ENCODE measurements at regions of chr1 and their contacts with region 1.

Region 1: DNA sequence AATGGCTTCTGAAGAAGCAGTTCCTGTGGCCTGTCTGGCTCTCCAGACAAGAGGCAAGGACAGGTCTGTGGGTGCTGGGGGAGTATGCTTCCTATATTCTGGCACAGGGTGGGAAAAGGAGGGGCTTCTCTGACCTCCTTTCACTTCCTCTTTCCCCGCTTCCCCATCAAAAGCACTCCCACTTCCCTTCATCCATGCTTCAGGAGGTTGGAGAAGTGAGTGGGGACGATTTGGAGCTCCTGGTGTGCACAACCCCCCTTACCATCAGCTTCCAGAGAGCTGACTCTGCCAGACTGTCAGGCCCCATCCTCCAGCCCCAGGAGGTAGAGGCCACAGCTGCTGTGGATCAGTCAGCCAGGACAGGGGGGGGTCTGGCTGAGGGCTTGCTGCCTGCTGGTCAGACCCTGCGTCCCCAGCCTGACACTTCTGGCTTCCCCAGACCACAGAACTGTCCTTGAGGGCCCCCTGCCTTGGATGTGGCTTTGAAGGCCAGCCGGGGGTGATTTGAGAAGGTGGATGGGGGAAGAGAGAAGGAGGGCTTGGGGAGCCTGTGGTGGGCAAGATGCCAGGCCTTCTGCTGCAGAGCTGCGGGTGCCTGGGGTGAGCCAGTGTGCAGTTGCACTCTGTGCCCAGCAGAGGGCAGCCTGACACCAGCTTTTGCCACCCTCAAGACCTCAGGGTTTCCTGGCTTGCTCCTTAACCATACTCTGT is 21.5 kb upstream of the TMEM222 start:
- DNase-seq: peak; percentile 80
- H3K4me3 Mint-ChIP-seq: no peak overlapping the region
- H3K27ac Mint-ChIP-seq: no peak overlapping the region
- H3K4me1 Mint-ChIP-seq: no peaks in the 10 kb centered on the region
- H3K27me3 Mint-ChIP-seq: no peaks in the 10 kb centered on the region

Region 2: DNA sequence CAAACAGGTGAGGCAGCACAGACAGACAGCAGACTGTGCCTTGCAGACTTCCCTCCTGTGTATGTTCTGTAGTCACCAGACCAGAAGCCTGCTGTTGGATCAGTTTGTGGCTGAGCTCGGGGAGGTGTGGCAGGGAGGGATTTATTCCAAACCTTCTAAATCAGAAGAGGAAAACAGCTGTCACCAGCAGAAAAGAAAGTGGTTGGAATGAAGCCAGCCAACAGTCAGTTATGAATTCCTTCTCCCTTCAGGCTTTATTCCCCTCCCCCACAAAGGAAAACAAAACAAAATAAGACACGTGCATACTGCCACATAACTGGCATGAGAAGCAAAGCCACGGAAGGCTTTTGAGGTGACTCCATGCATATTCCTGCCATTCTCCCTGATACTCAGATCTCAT is 531.7 kb before region 1 on chr1:
- CTCF ChIA-PET with region 1: no interaction called
- DNase-seq: no peak
- H3K4me3 Mint-ChIP-seq: no peak overlapping the region
- H3K27ac Mint-ChIP-seq: no peak overlapping the region
- H3K4me1 Mint-ChIP-seq: peaks cover 12% of the 10 kb centered on the region
- H3K27me3 Mint-ChIP-seq: no peaks in the 10 kb centered on the region

Region 3: GRCh38 chr1:27044613-27045151 is 255.8 kb before region 1 on chr1:
- CTCF ChIA-PET with region 1: interaction called, 48 read pairs
- DNase-seq: peak; percentile 93
- H3K4me3 Mint-ChIP-seq: peak overlapping the region; percentile 65
- H3K27ac Mint-ChIP-seq: peak overlapping the region; percentile 82
- H3K4me1 Mint-ChIP-seq: peaks cover 22% of the 10 kb centered on the region
- H3K27me3 Mint-ChIP-seq: peaks cover 25% of the 10 kb centered on the region

Region 4: DNA sequence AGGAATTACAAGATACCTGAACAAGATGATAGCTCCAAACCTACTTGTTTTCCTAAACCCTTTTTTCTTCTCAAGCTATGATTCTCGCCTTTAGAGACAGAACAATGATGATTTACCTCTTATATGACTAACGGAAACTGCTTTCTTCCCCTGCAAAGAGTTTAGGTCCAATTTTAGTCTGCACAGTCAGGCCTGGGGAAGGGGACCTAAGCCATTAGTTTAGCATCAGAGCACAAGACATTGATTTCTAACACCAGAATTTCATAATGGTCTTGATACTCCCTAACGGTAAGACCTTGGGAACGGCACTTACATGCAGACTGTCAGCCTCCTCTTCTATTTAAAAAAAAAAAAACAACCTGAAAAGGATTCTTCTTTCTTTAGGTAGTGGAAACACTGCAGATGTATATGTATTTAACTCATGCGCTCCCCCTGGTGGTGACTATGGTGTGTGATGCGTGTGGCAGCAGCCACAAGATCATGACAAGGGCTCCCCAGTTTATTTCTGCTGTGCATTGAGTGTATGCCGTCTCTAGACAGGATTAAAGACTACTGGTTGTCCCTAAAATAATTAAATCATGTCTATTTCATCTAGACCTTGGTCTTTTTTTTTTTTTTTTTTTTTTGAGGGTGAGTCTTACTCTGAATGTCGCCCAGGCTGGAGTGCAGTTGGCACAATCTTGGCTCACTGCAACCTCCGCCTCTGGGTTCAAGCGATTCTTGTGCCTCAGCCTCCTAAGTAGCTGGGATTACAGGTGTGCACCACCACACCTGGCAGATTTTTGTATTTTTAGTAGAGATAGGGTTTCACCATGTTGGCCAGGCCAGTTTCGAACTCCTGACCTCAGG is 15.8 kb before region 1 on chr1:
- CTCF ChIA-PET with region 1: interaction called, 22 read pairs
- DNase-seq: peak; percentile 93
- H3K4me3 Mint-ChIP-seq: no peak overlapping the region
- H3K27ac Mint-ChIP-seq: no peak overlapping the region
- H3K4me1 Mint-ChIP-seq: no peaks in the 10 kb centered on the region
- H3K27me3 Mint-ChIP-seq: no peaks in the 10 kb centered on the region

Region 5: DNA sequence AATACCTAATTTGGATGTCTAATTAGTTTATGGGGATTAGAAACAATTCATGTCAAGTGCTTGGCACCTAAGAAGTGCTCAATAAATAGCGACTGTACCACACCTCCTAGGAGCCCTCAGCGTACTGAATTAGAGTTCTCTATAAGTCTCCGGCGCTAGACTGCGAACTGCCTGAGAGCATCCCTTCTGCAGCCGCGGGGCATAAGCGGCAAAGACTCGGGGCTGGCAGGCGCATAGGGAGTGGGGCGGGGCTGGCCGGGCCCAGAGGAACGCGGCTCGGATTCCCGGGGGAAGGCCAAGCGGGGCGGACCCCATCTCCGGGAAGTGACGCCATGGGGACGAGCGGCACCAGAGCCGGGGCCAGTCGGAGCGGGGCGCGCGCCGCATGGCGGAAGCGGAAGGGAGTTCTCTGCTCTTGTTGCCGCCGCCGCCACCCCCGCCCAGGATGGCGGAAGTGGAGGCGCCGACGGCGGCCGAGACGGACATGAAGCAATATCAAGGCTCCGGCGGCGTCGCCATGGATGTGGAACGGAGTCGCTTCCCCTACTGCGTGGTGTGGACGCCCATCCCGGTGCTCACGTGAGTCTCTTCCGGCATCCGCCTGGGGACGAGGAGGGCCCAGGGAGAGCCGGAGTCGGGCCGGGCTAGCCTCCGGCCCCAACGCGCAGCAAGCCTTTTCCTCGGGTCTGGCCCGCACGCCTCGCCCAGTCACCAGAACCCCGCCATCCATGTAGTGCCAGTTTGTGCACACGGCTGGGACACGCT is 21.5 kb after region 1 on chr1 and contains the start of gene TMEM222:
- CTCF ChIA-PET with region 1: interaction called, 12 read pairs
- DNase-seq: peak; percentile 98
- H3K4me3 Mint-ChIP-seq: peak within 1 kb of the TSS; percentile 96
- H3K27ac Mint-ChIP-seq: peak within 1 kb of the TSS; percentile 92
- H3K4me1 Mint-ChIP-seq: peaks cover 41% of the 10 kb centered on the region
- H3K27me3 Mint-ChIP-seq: peaks cover 13% of the 10 kb centered on the region

Region 6: DNA sequence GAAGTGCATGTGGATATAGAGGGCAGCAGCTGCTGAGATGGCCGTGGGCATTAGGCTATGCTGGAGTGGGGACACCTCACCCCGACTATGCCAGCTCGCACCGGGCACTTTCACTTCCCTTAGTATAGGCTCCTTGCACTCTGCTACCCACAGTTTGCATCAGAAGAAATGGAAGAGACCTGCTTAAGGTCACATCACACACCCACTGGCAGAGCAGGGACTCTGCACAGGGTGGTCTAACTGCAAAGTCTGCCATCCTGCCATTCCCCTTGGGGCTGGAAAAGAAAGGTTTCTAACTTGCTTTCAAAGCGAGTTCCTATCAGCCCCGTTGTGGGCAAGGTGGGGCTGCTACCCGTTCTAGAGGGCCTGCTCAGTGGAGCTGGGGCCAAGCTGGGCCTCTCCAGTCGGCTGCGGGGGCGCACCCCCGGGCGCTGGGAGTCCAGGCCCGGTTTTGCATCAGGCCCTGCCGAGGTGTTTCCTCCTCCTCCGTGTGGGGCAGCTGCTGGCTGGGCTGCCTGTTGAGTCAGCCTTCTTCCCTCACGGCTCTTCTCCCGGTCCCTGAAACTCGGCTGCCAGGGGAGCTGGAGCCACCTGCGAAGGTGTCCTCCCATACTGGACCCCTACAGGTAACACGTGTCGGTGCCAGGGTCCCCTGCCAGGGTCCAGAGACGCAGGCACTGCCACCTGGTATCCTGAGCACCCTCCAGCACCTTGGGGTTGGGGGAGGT is 41.2 kb after region 1 on chr1 and contains the start of gene SYTL1:
- CTCF ChIA-PET with region 1: interaction called, 10 read pairs
- DNase-seq: peak; percentile 81
- H3K4me3 Mint-ChIP-seq: peak within 1 kb of the TSS; percentile 90
- H3K27ac Mint-ChIP-seq: peak within 1 kb of the TSS; percentile 90
- H3K4me1 Mint-ChIP-seq: peaks cover 59% of the 10 kb centered on the region
- H3K27me3 Mint-ChIP-seq: no peaks in the 10 kb centered on the region

Region 7: GRCh38 chr1:27392096-27392777 is 91.7 kb after region 1 on chr1 and contains the start of gene GPR3:
- CTCF ChIA-PET with region 1: interaction called, 536 read pairs
- DNase-seq: peak; percentile 96
- H3K4me3 Mint-ChIP-seq: peak within 1 kb of the TSS; percentile 71
- H3K27ac Mint-ChIP-seq: peak within 1 kb of the TSS; percentile 55
- H3K4me1 Mint-ChIP-seq: peaks cover 22% of the 10 kb centered on the region
- H3K27me3 Mint-ChIP-seq: peaks cover 35% of the 10 kb centered on the region

Measured in activated naive CD4-positive, alpha-beta T cell treated with anti-CD3 and anti-CD28 coated beads, Interleukin-2, amount 10 ng/mL, durations not matched to agents 7 days and 5 days (primary cell).